Tibial artery (tissue), 4 donors: ENCODE measurements at regions of chr12 and their contacts with region 1.

Region 1: GRCh38 chr12:25585021-25585523 is 32.0 kb upstream of the LMNTD1 start:
- DNase-seq: peak in 1 of 2 donors; percentile 68
- H3K4me3 ChIP-seq: no peak overlapping the region
- H3K27ac ChIP-seq: no peak overlapping the region
- H3K4me1 ChIP-seq: peaks cover 0 to 5% (median 0%) of the 10 kb centered on the region in 4 donors
- H3K27me3 ChIP-seq: no peaks in the 10 kb centered on the region
- CTCF ChIP-seq: no peak

Region 2: GRCh38 chr12:25455696-25456095 is 129.4 kb before region 1 on chr12:
- intact Hi-C with region 1: no loop called
- DNase-seq: no peak
- H3K4me3 ChIP-seq: no peak overlapping the region
- H3K27ac ChIP-seq: no peak overlapping the region
- H3K4me1 ChIP-seq: peaks cover 0 to 9% (median 0%) of the 10 kb centered on the region in 4 donors
- H3K27me3 ChIP-seq: no peaks in the 10 kb centered on the region
- CTCF ChIP-seq: no peak

Region 3: DNA sequence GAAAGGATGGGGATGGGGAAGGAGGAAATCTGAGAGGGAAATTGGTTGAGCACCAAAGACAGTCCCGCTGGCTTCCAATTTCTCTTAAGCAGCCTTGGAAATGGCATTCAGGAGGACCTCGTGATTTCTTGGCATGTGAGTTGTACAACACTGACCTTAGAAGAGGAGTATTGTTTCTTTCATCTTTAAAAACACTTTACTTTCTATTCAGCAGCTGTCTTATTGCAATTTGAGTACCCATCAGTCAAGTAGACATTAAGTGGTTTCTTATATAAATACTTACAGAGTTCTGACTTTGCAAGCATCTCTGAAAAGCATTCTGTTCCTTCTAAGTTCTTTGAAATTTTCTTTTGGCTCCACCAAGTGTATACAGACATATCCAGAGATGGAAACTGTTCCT is 115.2 kb before region 1 on chr12:
- intact Hi-C with region 1: no loop called
- DNase-seq: no peak
- H3K4me3 ChIP-seq: no peak overlapping the region
- H3K27ac ChIP-seq: no peak overlapping the region
- H3K4me1 ChIP-seq: no peaks in the 10 kb centered on the region
- H3K27me3 ChIP-seq: no peaks in the 10 kb centered on the region
- CTCF ChIP-seq: no peak

Region 4: GRCh38 chr12:25757037-25757665 is 172.1 kb after region 1 on chr12:
- intact Hi-C with region 1: no loop called
- DNase-seq: no peak
- H3K4me3 ChIP-seq: no peak overlapping the region
- H3K27ac ChIP-seq: no peak overlapping the region
- H3K4me1 ChIP-seq: no peaks in the 10 kb centered on the region
- H3K27me3 ChIP-seq: no peaks in the 10 kb centered on the region
- CTCF ChIP-seq: no peak

Region 5: GRCh38 chr12:26338586-26339572 is 753.8 kb after region 1 on chr12:
- intact Hi-C with region 1: loop called (anchors 5 kb)
- DNase-seq: no peak
- H3K4me3 ChIP-seq: no peak overlapping the region
- H3K27ac ChIP-seq: no peak overlapping the region
- H3K4me1 ChIP-seq: no peaks in the 10 kb centered on the region
- H3K27me3 ChIP-seq: no peaks in the 10 kb centered on the region
- CTCF ChIP-seq: no peak